ENCODE measurements at regions of chr4 and their contacts with region 1.

Region 1: DNA sequence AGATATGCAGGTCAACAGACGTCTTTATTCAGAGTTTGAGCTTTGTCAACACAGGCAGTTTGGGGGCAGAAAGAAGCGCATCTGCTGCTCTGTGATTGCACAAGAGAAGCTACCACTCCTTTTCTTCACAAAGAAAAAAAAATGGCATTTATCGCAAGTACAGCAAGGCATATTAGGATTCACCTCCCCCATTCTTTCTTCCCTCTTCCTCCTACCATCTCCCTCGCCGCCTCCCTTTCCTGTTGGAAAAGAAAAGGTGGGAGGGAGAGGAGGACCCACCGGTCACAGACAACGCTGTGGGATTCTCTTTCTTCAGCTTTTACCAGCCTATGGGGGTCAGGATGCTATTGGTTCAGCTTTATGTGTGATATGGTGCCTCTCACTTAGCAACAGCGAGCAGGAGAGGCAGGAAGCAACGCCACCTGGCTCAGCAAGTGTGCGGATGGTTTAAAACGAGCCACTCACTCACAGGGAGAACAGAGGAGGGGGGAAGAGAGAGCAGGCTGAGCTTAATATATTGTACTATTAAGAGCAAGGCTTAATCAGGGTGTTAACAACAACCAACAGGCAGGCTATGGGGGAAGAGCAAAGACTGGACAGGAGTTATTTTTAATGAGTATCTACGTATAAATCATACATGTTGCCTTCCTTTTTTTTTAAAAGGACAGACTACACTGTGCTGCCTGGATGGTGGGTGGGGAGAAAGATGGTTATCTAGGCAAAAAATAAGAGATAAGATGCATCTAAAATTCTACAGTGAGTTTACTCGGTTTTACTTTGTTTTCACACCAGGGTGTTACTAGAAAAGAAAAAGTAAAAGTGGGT is 104.7 kb downstream of the MAML3 start:
- DNase-seq: no peak
- H3K4me3 ChIP-seq: peak overlapping the region; percentile 44
- CTCF ChIP-seq: no peak

Region 2: DNA sequence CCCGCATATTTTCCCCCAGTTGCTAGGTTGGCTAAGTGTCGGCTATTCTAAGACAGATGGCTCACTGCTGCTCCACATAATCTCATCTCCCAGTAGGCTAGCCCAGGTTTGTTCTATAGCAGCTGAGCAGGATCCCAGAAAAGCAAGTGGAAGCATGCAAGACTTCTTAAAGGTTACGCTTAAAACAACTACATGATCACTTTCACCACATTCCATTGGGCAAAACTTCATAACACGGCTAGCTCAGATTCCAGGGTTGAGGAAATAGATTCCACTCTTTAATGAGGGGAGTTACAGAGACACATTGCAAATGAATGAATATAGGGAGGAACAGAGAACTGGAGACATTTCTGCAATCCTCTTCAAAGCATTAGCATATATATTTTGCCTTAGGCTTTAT is 608.2 kb before region 1 on chr4:
- CTCF ChIA-PET with region 1: no interaction called
- POLR2A ChIA-PET with region 1: no interaction called
- DNase-seq: peak; percentile 67
- H3K4me3 ChIP-seq: no peak overlapping the region
- CTCF ChIP-seq: no peak

Region 3: GRCh38 chr4:139740531-139741041 is 308.6 kb before region 1 on chr4:
- CTCF ChIA-PET with region 1: interaction called, 22 read pairs
- POLR2A ChIA-PET with region 1: no interaction called
- DNase-seq: peak; percentile 72
- H3K4me3 ChIP-seq: no peak overlapping the region
- CTCF ChIP-seq: peak; percentile 24

Region 4: DNA sequence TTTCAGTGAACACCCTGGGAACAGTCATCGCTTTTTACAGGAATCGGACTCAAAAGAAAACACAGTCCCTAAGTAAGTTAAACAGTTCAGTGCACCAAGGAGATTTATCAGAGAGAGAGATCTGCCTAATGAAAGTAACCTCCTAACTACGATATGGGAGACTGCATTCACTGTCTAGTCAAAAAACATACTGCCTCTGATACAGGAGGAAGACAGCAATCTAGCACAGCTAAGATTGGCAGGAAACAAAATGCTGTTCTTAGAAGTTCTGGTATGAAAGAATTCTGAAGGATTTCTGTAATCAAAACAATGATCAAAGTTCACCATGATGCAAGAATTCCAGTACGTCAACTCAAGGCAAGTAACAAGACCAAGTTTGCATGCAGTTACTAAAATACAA is 12.0 kb after region 1 on chr4:
- CTCF ChIA-PET with region 1: interaction called, 16 read pairs
- POLR2A ChIA-PET with region 1: no interaction called
- DNase-seq: no peak
- H3K4me3 ChIP-seq: no peak overlapping the region
- CTCF ChIP-seq: no peak

Measured in AG04449 (cell line).